A673 (cell line): ENCODE measurements at regions of chr12 and their contacts with region 1.

Region 1: GRCh38 chr12:69608114-69608513 is 2.6 kb downstream of the LRRC10 start:
- DNase-seq: no peak
- H3K4me3 ChIP-seq: no peak overlapping the region
- H3K27ac ChIP-seq: no peak overlapping the region
- H3K4me1 ChIP-seq: no peaks in the 10 kb centered on the region
- H3K27me3 ChIP-seq: no peaks in the 10 kb centered on the region
- CTCF ChIP-seq: no peak

Region 2: GRCh38 chr12:69330475-69331473 is 277.3 kb before region 1 on chr12:
- CTCF ChIA-PET with region 1: no interaction called
- POLR2A ChIA-PET with region 1: no interaction called
- intact Hi-C with region 1: no loop called
- DNase-seq: no peak
- H3K4me3 ChIP-seq: peak overlapping the region; percentile 25
- H3K27ac ChIP-seq: no peak overlapping the region
- H3K4me1 ChIP-seq: peaks cover 3% of the 10 kb centered on the region
- H3K27me3 ChIP-seq: peaks cover 17% of the 10 kb centered on the region
- CTCF ChIP-seq: no peak

Region 3: DNA sequence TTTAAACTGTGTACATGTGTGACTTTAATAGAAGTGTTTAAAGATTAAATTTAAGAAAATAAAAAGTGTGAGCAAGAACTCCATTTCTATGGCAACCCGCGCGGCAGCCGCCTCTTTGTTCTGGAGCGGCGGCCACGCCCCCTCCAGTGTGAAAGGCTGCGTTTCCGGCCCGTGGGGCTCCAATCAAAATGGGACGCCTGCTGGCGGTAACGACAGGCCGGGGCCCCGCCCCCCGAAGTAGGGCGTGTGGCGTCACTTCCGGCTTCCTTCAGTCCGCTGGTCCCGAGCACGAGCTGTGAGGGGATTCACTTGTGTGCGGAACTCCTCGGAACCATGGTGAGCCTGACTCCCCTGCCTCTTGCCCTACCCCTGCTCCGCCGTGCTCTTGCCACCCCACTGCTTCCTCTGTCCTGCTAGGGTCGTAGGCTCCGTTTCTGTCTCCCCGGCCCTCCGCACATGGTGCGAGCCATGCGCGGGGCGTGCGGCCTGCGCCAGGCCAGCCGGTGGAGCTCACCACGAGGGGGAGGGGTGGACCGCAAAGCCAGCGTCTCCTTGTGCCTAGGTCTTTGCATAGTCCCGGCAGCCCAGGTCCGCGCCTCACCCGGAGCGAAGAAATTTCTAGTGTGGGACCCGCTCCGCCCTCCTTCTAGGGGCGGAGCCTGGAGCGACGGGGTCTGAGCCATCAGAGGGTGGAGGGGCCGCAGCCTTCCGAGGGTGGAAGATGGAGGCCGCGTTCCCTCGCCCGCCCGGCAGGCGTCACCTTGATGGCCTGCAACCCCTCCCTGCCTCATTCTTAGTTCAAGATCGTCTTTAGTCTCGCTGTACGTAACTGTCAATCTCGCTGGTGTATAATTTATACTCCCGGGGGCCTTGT is 22.7 kb before region 1 on chr12 and contains the start of gene CCT2:
- CTCF ChIA-PET with region 1: no interaction called
- POLR2A ChIA-PET with region 1: interaction called, 12 read pairs
- intact Hi-C with region 1: no loop called
- DNase-seq: peak; percentile 98
- H3K4me3 ChIP-seq: peak within 1 kb of the TSS; percentile 89
- H3K27ac ChIP-seq: peak within 1 kb of the TSS; percentile 97
- H3K4me1 ChIP-seq: peaks cover 10% of the 10 kb centered on the region
- H3K27me3 ChIP-seq: no peaks in the 10 kb centered on the region
- CTCF ChIP-seq: 0 out of 2 replicates have a peak, but pooled peaks have one; percentile 29
- total RNA-seq, gene CCT2: 519 and 566 TPM in 2 replicates